ENCODE measurements at regions of chr5 and their contacts with region 1.

Region 1: GRCh38 chr5:159965031-159965837 is 43.7 kb upstream of the TTC1 start:
- DNase-seq: peak; percentile 86
- H3K4me3 Mint-ChIP-seq: no peak overlapping the region
- H3K27ac Mint-ChIP-seq: no peak overlapping the region
- H3K4me1 Mint-ChIP-seq: peaks cover 7% of the 10 kb centered on the region
- H3K27me3 Mint-ChIP-seq: no peaks in the 10 kb centered on the region
- CTCF ChIP-seq: peak; percentile 87

Region 2: GRCh38 chr5:159331093-159331973 is 633.9 kb before region 1 on chr5:
- CTCF ChIA-PET with region 1: no interaction called
- POLR2A ChIA-PET with region 1: no interaction called
- intact Hi-C with region 1: loop called (anchors 5 kb)
- DNase-seq: peak; percentile 49
- H3K4me3 Mint-ChIP-seq: peak overlapping the region; percentile 73
- H3K27ac Mint-ChIP-seq: peak overlapping the region; percentile 80
- H3K4me1 Mint-ChIP-seq: peaks cover 30% of the 10 kb centered on the region
- H3K27me3 Mint-ChIP-seq: no peaks in the 10 kb centered on the region
- CTCF ChIP-seq: peak; percentile 80

Region 3: DNA sequence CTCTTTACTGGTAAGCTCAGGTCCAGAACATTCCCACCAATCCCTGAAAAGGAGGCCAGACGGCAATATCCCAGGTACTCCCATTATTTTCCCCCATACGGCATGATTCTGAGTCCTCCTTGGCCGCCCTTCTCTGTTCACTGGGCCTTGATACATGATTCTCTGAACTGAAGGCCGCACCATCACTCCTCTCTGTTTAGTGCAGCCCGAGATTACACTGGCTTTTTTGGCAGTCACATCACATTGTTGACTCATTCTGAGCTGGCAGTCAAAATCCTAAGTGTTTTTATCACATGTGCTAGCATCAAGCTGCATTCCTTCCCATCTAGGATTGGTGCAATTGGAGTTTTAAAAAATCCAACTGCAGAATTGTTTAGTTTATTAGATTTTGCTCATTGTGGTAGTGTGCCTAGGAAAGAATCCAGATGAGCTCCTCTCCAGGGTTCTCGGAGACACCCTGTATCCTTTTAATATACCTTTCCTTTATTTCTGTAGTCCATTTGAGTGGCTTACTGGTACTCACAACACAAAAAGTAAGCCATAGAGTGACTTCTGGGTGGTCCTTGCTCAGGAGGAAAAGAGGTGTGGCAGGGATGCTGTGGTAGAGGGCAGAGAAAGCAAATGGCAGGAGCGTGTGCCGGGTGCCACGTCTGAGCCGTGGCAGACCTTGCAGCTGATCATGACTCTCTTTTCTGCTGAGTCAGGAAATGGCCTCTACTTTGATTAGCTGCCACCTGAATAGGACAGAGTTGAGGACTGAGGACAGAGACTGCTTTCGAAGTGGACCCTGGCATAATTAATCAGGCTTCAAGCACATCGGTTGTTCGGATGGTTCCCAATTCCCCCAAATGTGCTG is 513.8 kb before region 1 on chr5:
- CTCF ChIA-PET with region 1: interaction called, 23 read pairs
- POLR2A ChIA-PET with region 1: interaction called, 3 read pairs
- intact Hi-C with region 1: no loop called
- DNase-seq: peak; percentile 97
- H3K4me3 Mint-ChIP-seq: no peak overlapping the region
- H3K27ac Mint-ChIP-seq: peak overlapping the region; percentile 4
- H3K4me1 Mint-ChIP-seq: peaks cover 33% of the 10 kb centered on the region
- H3K27me3 Mint-ChIP-seq: no peaks in the 10 kb centered on the region
- CTCF ChIP-seq: no peak

Region 4: DNA sequence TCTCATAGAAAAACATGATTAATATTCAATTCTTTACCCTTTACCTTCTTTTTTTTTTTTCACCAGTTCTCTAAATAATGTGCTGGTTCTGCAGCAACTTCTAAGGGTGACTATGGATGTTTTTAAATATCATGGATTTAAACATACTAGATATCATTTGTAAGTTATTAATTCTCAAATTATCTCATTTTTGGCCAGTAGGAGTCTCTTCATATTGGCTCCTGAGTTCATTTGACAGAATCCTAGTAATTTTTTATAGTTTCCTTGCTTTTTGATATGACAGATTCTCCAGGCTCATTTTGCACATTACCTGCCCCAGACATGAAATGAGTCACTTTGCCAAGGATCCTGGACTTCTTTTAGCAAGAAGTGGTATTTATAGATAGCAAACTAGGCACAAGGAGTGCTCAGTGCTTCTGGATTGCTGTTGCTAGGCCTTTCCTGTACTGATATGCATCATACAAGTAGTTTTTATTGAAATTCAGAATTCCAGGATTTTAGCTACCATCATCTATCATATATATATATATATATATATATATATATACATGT is 433.6 kb before region 1 on chr5:
- CTCF ChIA-PET with region 1: interaction called, 8 read pairs
- POLR2A ChIA-PET with region 1: no interaction called
- intact Hi-C with region 1: loop called (anchors 1 kb)
- DNase-seq: no peak
- H3K4me3 Mint-ChIP-seq: no peak overlapping the region
- H3K27ac Mint-ChIP-seq: no peak overlapping the region
- H3K4me1 Mint-ChIP-seq: peaks cover 8% of the 10 kb centered on the region
- H3K27me3 Mint-ChIP-seq: no peaks in the 10 kb centered on the region
- CTCF ChIP-seq: peak; percentile 38

Region 5: DNA sequence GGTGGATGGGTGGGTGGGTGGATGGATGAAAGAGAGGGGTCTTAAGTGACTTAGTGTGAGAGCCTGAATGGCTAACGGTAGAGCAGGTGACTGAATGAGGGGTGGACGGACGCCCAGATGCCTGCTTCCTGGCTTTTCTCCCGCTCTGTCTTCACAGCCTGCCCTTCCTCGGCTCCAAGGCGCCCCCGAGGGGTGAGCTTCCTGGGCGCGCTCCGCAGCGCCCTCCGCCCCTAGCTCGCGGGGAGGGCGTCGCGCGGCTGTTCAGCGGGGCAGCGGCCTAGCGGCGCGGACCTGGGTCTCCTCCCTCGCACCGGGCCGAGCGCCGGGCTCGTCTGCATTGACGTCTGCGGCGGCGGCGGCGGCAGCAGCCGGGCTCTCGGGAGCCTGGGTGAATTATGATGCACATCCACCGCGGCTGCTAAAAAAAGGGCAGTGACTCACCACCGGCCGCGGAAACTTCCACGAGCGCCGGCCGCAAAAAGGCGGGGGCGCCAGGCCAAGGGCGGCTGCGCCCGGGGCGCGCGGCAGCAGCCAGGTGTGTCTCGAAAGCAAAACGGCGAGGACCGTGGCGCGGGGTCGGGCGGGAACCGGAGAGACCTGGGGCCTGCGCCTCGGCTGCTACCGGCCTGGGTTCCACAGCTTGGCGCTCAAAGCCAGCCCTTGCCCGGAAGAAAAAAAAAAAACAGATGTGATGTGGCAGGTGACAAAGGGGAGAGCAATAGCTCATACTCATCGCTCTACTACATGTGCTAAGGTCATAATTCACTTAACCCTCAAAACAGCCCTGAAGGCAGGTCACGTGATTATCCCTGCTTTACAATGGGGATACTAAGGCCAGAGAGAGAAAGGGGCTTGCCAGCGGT is 191.9 kb before region 1 on chr5:
- CTCF ChIA-PET with region 1: interaction called, 5 read pairs
- POLR2A ChIA-PET with region 1: no interaction called
- intact Hi-C with region 1: loop called (anchors 5 kb)
- DNase-seq: peak; percentile 93
- H3K4me3 Mint-ChIP-seq: peak overlapping the region; percentile 58
- H3K27ac Mint-ChIP-seq: no peak overlapping the region
- H3K4me1 Mint-ChIP-seq: peaks cover 8% of the 10 kb centered on the region
- H3K27me3 Mint-ChIP-seq: no peaks in the 10 kb centered on the region
- CTCF ChIP-seq: no peak

Region 6: DNA sequence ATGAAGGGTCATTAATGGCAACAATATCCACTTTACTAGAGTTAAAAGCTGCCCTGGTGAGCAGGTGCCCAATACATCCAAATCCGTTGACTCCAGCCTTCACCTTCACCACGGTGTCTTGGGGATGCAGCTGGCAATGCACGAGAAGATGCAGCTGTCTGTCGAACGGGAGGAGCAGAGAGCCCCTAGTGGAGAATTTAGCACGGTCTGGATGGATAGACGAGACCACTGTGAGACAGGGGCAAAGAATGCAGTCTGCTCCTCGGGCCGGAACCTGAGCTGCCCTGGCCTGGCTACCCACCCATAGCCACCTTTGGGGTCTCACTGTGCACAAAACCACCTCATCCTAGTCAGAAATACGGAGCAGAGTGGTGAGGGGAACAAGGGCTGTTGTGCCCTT is 13.8 kb before region 1 on chr5:
- CTCF ChIA-PET with region 1: interaction called, 18 read pairs
- POLR2A ChIA-PET with region 1: no interaction called
- intact Hi-C with region 1: no loop called
- DNase-seq: no peak
- H3K4me3 Mint-ChIP-seq: no peak overlapping the region
- H3K27ac Mint-ChIP-seq: no peak overlapping the region
- H3K4me1 Mint-ChIP-seq: no peaks in the 10 kb centered on the region
- H3K27me3 Mint-ChIP-seq: no peaks in the 10 kb centered on the region
- CTCF ChIP-seq: no peak

Region 7: DNA sequence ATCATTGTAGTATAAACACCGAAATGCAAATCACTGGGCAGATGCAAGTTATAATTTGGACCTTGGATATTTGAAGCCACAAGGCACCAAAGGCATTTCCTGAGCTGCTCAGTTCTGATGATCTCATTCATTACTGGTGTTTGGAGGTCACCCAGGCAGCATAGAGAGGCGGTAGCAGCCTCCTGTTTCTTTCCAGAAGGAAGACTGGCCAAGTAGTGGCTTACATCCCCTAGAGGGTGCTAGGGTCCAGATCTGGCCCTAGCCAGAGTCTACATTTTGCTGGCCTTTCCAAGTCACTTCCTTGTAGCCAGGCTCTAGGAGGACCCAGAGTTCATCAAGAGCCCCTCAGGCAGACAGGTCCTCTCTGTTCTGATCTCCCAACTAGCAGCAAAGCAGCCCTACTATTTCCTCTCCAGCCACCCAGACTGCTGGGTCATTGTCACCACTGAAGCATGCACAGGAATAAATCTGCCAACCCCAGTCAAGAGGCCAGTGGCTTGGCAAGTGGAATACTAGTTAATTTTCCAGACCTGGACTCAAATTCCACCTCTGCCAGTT is 10.3 kb after region 1 on chr5:
- CTCF ChIA-PET with region 1: interaction called, 12 read pairs
- POLR2A ChIA-PET with region 1: interaction called, 3 read pairs
- intact Hi-C with region 1: no loop called
- DNase-seq: peak; percentile 69
- H3K4me3 Mint-ChIP-seq: no peak overlapping the region
- H3K27ac Mint-ChIP-seq: no peak overlapping the region
- H3K4me1 Mint-ChIP-seq: peaks cover 9% of the 10 kb centered on the region
- H3K27me3 Mint-ChIP-seq: no peaks in the 10 kb centered on the region
- CTCF ChIP-seq: no peak

Region 8: GRCh38 chr5:161580621-161581020 is 1615.4 kb after region 1 on chr5:
- CTCF ChIA-PET with region 1: no interaction called
- POLR2A ChIA-PET with region 1: no interaction called
- intact Hi-C with region 1: no loop called
- DNase-seq: no peak
- H3K4me3 Mint-ChIP-seq: no peak overlapping the region
- H3K27ac Mint-ChIP-seq: no peak overlapping the region
- H3K4me1 Mint-ChIP-seq: no peaks in the 10 kb centered on the region
- H3K27me3 Mint-ChIP-seq: no peaks in the 10 kb centered on the region
- CTCF ChIP-seq: no peak